ENCODE measurements at regions of chr1 and their contacts with region 1.

Region 1: GRCh38 chr1:167627865-167628641 is 2.0 kb upstream of the RCSD1 start:
- DNase-seq: peak; percentile 74
- ATAC-seq: peak; percentile 81
- H3K4me3 Mint-ChIP-seq: peak overlapping the region; percentile 88
- H3K27ac Mint-ChIP-seq: peak overlapping the region; percentile 93
- H3K4me1 Mint-ChIP-seq: peaks cover 48% of the 10 kb centered on the region
- H3K27me3 Mint-ChIP-seq: no peaks in the 10 kb centered on the region

Region 2: GRCh38 chr1:167599957-167600581 is 28.0 kb before region 1 on chr1:
- POLR2A ChIA-PET with region 1: interaction called, 79 read pairs
- DNase-seq: peak; percentile 46
- ATAC-seq: peak; percentile 79
- H3K4me3 Mint-ChIP-seq: peak overlapping the region; percentile 76
- H3K27ac Mint-ChIP-seq: peak overlapping the region; percentile 82
- H3K4me1 Mint-ChIP-seq: peaks cover 37% of the 10 kb centered on the region
- H3K27me3 Mint-ChIP-seq: no peaks in the 10 kb centered on the region

Region 3: GRCh38 chr1:167617153-167618147 is 10.6 kb before region 1 on chr1:
- POLR2A ChIA-PET with region 1: interaction called, 92 read pairs
- DNase-seq: peak; percentile 44
- ATAC-seq: peak; percentile 81
- H3K4me3 Mint-ChIP-seq: peak overlapping the region; percentile 83
- H3K27ac Mint-ChIP-seq: peak overlapping the region; percentile 94
- H3K4me1 Mint-ChIP-seq: peaks cover 49% of the 10 kb centered on the region
- H3K27me3 Mint-ChIP-seq: no peaks in the 10 kb centered on the region

Region 4: GRCh38 chr1:167650269-167651160 is 22.5 kb after region 1 on chr1:
- POLR2A ChIA-PET with region 1: interaction called, 16 read pairs
- DNase-seq: peak; percentile 44
- ATAC-seq: peak; percentile 70
- H3K4me3 Mint-ChIP-seq: peak overlapping the region; percentile 58
- H3K27ac Mint-ChIP-seq: peak overlapping the region; percentile 75
- H3K4me1 Mint-ChIP-seq: peaks cover 66% of the 10 kb centered on the region
- H3K27me3 Mint-ChIP-seq: no peaks in the 10 kb centered on the region

Region 5: DNA sequence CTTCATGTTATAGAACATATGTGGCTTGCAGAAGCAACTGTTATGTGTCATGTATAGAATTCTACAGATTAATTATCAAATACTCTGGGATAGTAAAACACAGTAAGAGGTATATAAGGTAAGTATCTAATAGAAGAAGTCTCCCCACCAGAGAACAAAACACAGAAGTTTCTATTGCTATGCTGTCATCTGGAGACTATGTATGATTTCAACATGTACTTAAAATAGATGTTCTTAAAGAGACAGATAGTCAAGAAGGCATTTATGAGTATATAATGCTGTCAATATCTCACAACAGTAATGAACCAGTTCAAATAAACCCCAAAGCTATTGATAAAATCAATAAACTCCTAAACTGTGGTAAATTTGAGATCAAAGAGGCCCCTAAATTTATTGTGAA is 294.0 kb after region 1 on chr1:
- POLR2A ChIA-PET with region 1: no interaction called
- DNase-seq: no peak
- ATAC-seq: no peak
- H3K4me3 Mint-ChIP-seq: no peak overlapping the region
- H3K27ac Mint-ChIP-seq: no peak overlapping the region
- H3K4me1 Mint-ChIP-seq: no peaks in the 10 kb centered on the region
- H3K27me3 Mint-ChIP-seq: no peaks in the 10 kb centered on the region